ENCODE measurements at regions of chr11 and their contacts with region 1.

Region 1: DNA sequence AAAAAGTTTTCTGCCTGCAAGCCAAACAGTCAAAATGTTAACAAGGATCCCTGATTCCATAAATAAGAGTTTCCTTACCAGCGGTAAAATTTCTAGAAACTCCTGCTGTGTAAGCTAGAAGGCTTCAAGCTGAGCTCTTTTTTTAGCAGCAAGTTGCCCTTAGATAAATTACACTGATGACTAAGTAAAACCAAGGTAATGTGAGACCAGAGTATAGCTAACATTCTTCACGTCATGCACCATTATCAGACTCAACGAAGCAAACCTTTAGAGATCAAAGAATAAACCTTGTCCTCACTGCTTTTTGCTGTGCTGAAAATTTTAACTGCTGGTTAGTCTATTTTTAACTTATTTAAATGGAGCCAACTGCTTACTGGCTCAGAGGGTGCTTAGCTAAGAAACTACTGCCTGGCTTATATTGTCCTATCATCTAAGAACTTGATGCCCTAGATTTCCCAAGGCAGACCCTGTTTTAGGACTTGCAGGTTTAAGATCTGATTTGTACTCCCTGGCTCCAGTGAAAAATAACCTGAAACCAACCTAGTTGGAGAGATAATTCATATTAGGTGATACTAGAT is 900.7 kb downstream of the JRKL start:
- DNase-seq: no peak
- H3K4me3 Mint-ChIP-seq: no peak overlapping the region
- H3K27ac Mint-ChIP-seq: no peak overlapping the region
- H3K4me1 Mint-ChIP-seq: no peaks in the 10 kb centered on the region
- H3K27me3 Mint-ChIP-seq: no peaks in the 10 kb centered on the region

Region 2: GRCh38 chr11:96885405-96885804 is 405.1 kb before region 1 on chr11:
- CTCF ChIA-PET with region 1: no interaction called
- POLR2A ChIA-PET with region 1: no interaction called
- intact Hi-C with region 1: loop called (anchors 10 kb)
- DNase-seq: no peak
- H3K4me3 Mint-ChIP-seq: no peak overlapping the region
- H3K27ac Mint-ChIP-seq: no peak overlapping the region
- H3K4me1 Mint-ChIP-seq: no peaks in the 10 kb centered on the region
- H3K27me3 Mint-ChIP-seq: no peaks in the 10 kb centered on the region

Region 3: DNA sequence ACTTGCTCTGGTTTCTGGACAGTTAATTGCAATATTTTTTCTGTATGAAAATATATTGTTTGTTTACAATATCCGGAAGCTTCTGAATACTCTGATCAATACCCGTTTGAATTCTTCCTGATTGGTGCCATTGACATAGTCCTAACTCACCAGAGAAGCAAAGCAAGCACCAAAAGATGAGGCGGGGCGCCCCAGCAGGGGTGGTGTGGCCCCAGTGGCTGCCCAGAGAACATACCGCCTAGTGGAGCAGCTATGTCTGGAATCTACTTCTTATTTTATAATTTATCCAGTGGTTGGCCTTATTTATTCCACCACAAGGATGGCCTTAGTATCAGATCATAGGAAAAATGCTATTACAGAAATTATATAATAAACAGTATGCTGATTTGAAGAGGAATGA is 290.1 kb before region 1 on chr11:
- CTCF ChIA-PET with region 1: no interaction called
- POLR2A ChIA-PET with region 1: no interaction called
- intact Hi-C with region 1: no loop called
- DNase-seq: no peak
- H3K4me3 Mint-ChIP-seq: no peak overlapping the region
- H3K27ac Mint-ChIP-seq: no peak overlapping the region
- H3K4me1 Mint-ChIP-seq: no peaks in the 10 kb centered on the region
- H3K27me3 Mint-ChIP-seq: no peaks in the 10 kb centered on the region